ENCODE measurements at regions of chr22 and their contacts with region 1.

Region 1: GRCh38 chr22:33192156-33192555 is 134.0 kb upstream of the SYN3 start:
- DNase-seq: peak; percentile 96
- H3K4me3 ChIP-seq: peak overlapping the region; percentile 49
- H3K27ac ChIP-seq: peak overlapping the region; percentile 98
- H3K4me1 ChIP-seq: peaks cover 70% of the 10 kb centered on the region
- CTCF ChIP-seq: no peak

Region 2: DNA sequence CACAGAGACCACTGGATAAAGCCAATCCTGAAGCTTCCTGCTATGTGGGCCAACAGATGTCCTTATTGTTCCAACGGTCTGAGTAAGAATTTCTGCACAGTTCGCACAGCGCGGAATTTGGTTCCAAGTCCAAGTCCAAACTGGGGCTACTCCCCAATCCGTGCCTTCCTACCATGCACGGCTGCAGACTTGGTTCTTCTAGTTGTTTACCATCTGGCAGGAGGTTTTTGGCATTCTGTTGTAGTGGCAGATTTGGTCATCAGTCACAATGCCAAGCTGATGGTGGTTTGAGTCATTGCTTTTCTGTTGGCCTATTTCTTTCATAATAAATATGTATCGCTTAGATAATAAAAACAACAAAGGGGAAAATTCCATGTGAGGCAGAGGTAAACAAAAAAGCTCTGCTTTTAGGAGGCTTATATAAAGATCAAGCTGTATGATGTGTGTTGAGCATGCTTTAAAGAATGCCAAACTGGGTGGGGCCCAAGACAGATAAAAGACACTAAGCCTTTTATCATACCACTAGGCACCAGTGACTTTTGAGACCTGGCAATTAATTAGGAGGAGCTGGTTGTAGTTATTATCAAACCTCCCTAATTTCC is 81.5 kb before region 1 on chr22:
- CTCF ChIA-PET with region 1: no interaction called
- POLR2A ChIA-PET with region 1: interaction called, 5 read pairs
- intact Hi-C with region 1: loop called (anchors 1 kb)
- DNase-seq: no peak
- H3K4me3 ChIP-seq: no peak overlapping the region
- H3K27ac ChIP-seq: peak overlapping the region; percentile 92
- H3K4me1 ChIP-seq: peaks cover 58% of the 10 kb centered on the region
- CTCF ChIP-seq: no peak

Region 3: GRCh38 chr22:33389936-33390335 is 197.8 kb after region 1 on chr22:
- CTCF ChIA-PET with region 1: no interaction called
- POLR2A ChIA-PET with region 1: no interaction called
- intact Hi-C with region 1: no loop called
- DNase-seq: no peak
- H3K4me3 ChIP-seq: no peak overlapping the region
- H3K27ac ChIP-seq: no peak overlapping the region
- H3K4me1 ChIP-seq: no peaks in the 10 kb centered on the region
- CTCF ChIP-seq: no peak

Measured in OCI-LY7 (cell line).